ENCODE measurements at regions of chr3 and their contacts with region 1.

Region 1: GRCh38 chr3:141011232-141011996 is 39.7 kb upstream of the SPSB4 start:
- DNase-seq: peak; percentile 76 to 85
- H3K4me3 ChIP-seq: no peak overlapping the region
- H3K4me3 Mint-ChIP-seq: no peak overlapping the region
- H3K27ac Mint-ChIP-seq: no peak overlapping the region
- H3K4me1 ChIP-seq: no peaks in the 10 kb centered on the region
- H3K4me1 Mint-ChIP-seq: no peaks in the 10 kb centered on the region
- H3K27me3 ChIP-seq: no peaks in the 10 kb centered on the region
- H3K27me3 Mint-ChIP-seq: no peaks in the 10 kb centered on the region
- CTCF ChIP-seq: peak; percentile 78 to 91

Region 2: DNA sequence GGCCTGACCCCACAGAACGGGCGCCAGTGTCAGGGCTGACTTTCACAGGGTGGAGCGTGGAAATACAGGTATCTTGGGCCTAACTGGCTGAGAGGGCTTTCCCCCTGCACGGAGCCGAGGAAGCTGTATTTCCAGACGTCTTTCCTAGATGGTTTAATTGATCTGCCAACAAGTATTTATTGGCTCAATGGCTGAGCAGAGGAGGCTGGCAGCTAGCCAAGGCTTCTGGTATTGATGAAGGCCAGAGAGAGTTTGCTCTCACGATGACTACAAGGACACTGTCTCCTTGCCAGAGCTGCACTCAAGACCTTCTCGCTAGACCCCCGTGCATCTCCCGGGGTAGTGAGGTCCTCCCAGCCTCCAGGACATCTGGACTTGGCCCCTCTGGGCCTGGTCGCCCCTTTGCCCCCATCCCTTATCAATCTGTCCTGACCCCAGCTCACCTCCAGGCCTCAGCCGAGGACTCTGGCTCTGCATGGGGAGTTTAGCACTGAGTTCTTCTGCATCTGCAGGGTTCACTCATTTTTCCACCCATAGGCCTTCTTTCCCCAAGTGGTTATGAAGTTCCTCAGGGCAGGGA is 60.4 kb after region 1 on chr3:
- CTCF ChIA-PET with region 1: interaction called, 3 read pairs
- POLR2A ChIA-PET with region 1: no interaction called
- intact Hi-C with region 1: loop called (anchors 5 kb)
- DNase-seq: no peak
- H3K4me3 ChIP-seq: no peak overlapping the region
- H3K4me3 Mint-ChIP-seq: no peak overlapping the region
- H3K27ac Mint-ChIP-seq: no peak overlapping the region
- H3K4me1 ChIP-seq: peaks cover 10% of the 10 kb centered on the region
- H3K4me1 Mint-ChIP-seq: peaks cover 9% of the 10 kb centered on the region
- H3K27me3 ChIP-seq: no peaks in the 10 kb centered on the region
- H3K27me3 Mint-ChIP-seq: no peaks in the 10 kb centered on the region
- CTCF ChIP-seq: no peak

Region 3: GRCh38 chr3:141114816-141115460 is 103.5 kb after region 1 on chr3:
- CTCF ChIA-PET with region 1: interaction called, 10 read pairs
- POLR2A ChIA-PET with region 1: no interaction called
- intact Hi-C with region 1: no loop called
- DNase-seq: peak in 1 of 2 experiments; percentile 25
- H3K4me3 ChIP-seq: no peak overlapping the region
- H3K4me3 Mint-ChIP-seq: no peak overlapping the region
- H3K27ac Mint-ChIP-seq: no peak overlapping the region
- H3K4me1 ChIP-seq: no peaks in the 10 kb centered on the region
- H3K4me1 Mint-ChIP-seq: no peaks in the 10 kb centered on the region
- H3K27me3 ChIP-seq: no peaks in the 10 kb centered on the region
- H3K27me3 Mint-ChIP-seq: peaks cover 3% of the 10 kb centered on the region
- CTCF ChIP-seq: peak in 1 of 2 experiments; percentile 57